Aorta (tissue), 5 donors: ENCODE measurements at regions of chr14 and their contacts with region 1.

Region 1: DNA sequence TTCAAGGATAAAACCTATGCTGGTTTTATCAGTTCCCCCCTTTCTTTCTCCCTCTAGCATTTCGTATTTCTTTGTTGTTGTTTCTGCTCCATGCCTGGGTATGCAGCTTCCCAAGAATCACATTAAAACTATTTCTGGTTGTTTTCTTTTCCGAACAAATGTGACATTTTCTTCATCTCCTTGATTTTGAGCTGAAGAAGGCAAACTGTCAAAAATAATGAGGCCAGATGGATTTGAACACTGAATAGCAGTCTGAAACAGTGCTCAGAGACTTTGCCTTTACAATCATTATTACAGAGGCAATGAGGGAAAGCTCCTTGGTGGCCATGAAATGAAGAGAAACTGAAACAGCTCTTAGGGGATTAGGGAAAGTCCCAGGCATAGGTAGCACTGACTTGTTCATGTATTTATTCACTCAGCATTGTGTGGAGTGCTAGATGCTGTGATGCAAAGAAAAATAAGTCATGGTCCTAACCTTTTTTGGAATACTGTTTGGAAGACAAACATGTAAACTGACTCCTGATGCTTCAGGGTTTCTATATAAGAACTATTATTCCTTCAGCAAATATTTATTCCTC is 319.5 kb downstream of the FUT8 start:
- DNase-seq: no peak
- ATAC-seq: no peak
- H3K4me3 ChIP-seq: no peak overlapping the region
- H3K27ac ChIP-seq: no peak overlapping the region
- H3K4me1 ChIP-seq: peaks cover 0 to 3% of the 10 kb centered on the region in 2 donors
- H3K27me3 ChIP-seq: no peaks in the 10 kb centered on the region

Region 2: GRCh38 chr14:65745396-65746190 is 13.6 kb after region 1 on chr14:
- intact Hi-C with region 1: loop called in 1 of 2 experiments (anchors 1 kb)
- DNase-seq: no peak
- ATAC-seq: no peak
- H3K4me3 ChIP-seq: no peak overlapping the region
- H3K27ac ChIP-seq: no peak overlapping the region
- H3K4me1 ChIP-seq: no peaks in the 10 kb centered on the region
- H3K27me3 ChIP-seq: no peaks in the 10 kb centered on the region

Region 3: DNA sequence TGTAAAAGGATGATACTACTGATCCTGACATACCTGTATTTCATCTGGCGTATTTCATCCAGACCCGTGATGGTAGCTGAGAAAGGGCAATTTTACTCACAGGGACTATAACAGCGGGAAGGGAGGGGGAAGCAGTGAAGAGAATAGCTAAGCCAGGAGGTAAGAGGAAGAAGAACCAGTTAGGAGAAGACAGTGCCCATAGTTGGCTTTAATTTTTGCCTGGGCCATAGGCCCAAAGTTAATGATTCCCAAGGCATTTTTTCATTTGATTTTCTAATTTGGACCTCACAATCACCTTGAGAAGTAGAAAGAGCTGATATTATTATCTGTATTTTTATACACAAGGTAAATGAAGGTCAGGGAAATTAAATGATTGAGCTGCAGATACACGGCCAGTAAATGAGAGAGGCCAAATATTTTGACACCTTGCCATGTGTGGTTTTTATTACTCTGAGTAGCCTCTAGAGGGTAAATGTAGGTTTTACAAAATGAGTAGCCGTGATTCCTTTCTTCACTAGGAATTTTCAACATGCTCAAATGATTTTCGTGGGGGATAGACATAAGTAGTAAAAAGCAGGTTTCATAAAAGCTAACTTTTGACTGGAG is 62.8 kb after region 1 on chr14:
- intact Hi-C with region 1: no loop called
- DNase-seq: no peak
- ATAC-seq: no peak
- H3K4me3 ChIP-seq: no peak overlapping the region
- H3K27ac ChIP-seq: no peak overlapping the region
- H3K4me1 ChIP-seq: no peaks in the 10 kb centered on the region
- H3K27me3 ChIP-seq: no peaks in the 10 kb centered on the region